Activated CD4-positive, alpha-beta memory T cell treated with anti-CD3 and anti-CD28 coated beads, Interleukin-2, amount 10 ng/mL, durations not matched to agents 7 days and 5 days (primary cell): ENCODE measurements at regions of chr1 and their contacts with region 1.

Region 1: GRCh38 chr1:212062832-212063438 is 27.4 kb downstream of the DTL start:
- DNase-seq: no peak
- H3K4me3 Mint-ChIP-seq: no peak overlapping the region
- H3K27ac Mint-ChIP-seq: no peak overlapping the region
- H3K4me1 Mint-ChIP-seq: peaks cover 5% of the 10 kb centered on the region
- H3K27me3 Mint-ChIP-seq: no peaks in the 10 kb centered on the region

Region 2: DNA sequence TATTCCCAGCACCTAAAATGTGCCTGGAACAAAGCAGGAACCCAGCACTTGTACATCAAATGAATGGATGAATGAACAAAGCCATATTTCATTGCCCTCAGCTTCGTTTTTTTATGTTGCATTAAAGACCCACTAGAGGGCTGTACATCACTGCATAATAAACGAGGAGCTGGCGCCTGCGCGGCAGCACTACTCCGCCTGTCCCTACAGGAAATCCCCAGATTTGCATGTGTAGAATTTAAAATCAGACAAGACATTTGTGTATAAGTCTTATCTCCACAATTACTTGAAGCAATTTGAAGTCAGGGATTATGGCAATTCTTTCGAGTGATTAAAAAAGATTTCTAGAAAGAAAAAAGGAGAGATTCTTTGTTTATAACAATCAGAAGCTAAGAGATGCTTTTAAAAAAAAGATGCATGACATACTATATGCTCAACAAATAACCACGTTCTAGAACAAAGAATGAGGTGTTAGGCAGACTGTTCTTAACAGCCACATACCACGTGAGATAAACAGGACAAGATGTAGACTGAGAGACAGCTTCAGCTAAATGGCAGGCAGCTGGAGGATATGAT is 382.1 kb before region 1 on chr1:
- CTCF ChIA-PET with region 1: interaction called, 11 read pairs
- POLR2A ChIA-PET with region 1: no interaction called
- DNase-seq: peak; percentile 76
- H3K4me3 Mint-ChIP-seq: no peak overlapping the region
- H3K27ac Mint-ChIP-seq: peak overlapping the region; percentile 58
- H3K4me1 Mint-ChIP-seq: peaks cover 15% of the 10 kb centered on the region
- H3K27me3 Mint-ChIP-seq: peaks cover 2% of the 10 kb centered on the region

Region 3: DNA sequence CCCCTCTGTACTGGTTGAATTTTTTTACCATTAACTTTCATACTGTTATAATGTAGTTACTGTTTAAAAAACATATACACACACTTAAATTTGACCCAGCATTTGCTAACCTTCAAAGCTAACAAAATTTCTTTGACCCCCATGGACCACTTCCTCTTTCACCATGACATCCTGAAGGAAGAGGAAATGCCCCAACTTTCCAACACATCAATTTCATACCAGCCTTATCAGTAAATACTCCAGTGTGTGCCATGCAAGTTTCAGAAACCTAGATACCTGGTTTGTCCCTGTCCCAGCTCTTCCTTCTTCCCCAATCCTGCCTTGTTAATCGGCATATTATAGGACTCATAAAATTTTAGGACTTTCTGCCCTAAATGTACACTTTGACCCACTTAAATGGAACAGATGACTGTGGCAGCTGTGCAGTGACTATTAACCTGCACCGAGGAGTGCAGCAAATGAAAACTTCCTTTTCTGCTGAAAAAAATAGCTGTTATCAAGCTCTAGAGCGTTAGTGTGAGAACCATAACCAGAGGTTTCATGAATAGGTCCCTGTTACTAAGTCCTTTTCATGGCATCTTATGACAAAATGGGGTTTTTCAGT is 26.7 kb after region 1 on chr1:
- CTCF ChIA-PET with region 1: interaction called, 11 read pairs
- POLR2A ChIA-PET with region 1: no interaction called
- DNase-seq: no peak
- H3K4me3 Mint-ChIP-seq: no peak overlapping the region
- H3K27ac Mint-ChIP-seq: no peak overlapping the region
- H3K4me1 Mint-ChIP-seq: peaks cover 15% of the 10 kb centered on the region
- H3K27me3 Mint-ChIP-seq: no peaks in the 10 kb centered on the region

Region 4: GRCh38 chr1:212291505-212292134 is 228.7 kb after region 1 on chr1:
- CTCF ChIA-PET with region 1: interaction called, 30 read pairs
- POLR2A ChIA-PET with region 1: interaction called, 6 read pairs
- DNase-seq: no peak
- H3K4me3 Mint-ChIP-seq: peak overlapping the region; percentile 3
- H3K27ac Mint-ChIP-seq: no peak overlapping the region
- H3K4me1 Mint-ChIP-seq: peaks cover 70% of the 10 kb centered on the region
- H3K27me3 Mint-ChIP-seq: no peaks in the 10 kb centered on the region

Region 5: DNA sequence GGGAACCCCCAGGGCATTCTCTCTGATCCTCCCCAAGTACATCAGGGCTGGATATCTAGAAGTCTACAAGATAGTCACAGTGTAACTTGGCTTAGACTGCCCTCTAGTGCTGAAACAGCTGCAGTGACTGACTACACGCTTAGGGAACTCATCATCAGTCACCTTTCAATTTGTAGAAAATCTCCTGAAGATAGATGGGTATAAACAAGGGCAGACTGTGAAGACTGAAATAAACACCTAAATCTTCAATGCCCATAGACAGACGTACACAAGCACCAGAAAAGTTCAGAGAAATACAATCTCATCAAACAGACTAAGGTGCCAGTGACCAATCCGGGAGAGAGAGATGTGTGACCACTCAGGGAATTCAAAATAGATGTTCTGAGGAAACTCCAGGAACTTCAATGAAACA is 305.1 kb after region 1 on chr1:
- CTCF ChIA-PET with region 1: interaction called, 28 read pairs
- POLR2A ChIA-PET with region 1: no interaction called
- DNase-seq: peak; percentile 65
- H3K4me3 Mint-ChIP-seq: no peak overlapping the region
- H3K27ac Mint-ChIP-seq: no peak overlapping the region
- H3K4me1 Mint-ChIP-seq: peaks cover 2% of the 10 kb centered on the region
- H3K27me3 Mint-ChIP-seq: no peaks in the 10 kb centered on the region